ENCODE measurements at regions of chr19 and their contacts with region 1.

Region 1: DNA sequence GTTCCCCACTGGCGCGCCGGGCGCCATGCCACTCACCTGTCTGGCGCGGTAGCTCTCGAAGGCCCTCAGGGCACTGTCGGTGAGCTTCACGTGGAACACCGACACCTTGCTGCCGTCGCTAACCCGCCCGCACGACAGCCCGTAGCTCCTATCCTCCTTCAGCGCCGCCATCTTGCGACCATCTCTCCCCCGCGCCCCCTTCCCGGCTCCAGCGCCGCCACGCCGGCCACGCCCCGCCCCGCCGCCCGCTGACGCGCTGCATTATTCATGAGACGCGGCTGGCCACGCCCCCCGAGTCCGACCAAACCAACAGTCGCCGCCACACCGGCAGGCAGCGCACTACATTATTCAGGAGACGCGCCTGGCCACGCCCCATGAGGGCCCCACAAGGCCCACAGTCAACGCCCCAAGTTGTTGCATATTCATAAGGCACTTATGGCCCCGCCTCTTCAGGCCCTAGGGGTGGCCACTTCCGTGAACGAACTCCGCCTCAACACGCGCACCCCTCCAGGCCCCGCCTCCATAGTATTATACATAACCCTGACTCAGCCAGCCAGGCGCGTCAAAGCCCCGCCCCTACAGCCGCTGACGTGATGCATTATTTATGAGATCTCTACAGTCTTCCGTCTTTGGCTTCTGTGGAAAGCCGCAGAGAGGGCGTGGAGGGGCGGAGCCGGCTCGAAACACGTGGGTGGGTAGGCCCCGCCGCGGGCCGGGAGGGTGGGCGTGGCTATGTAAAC is at the start of gene ELL:
- DNase-seq: peak; percentile 100
- H3K4me3 ChIP-seq: peak within 1 kb of the TSS; percentile 92
- H3K27ac ChIP-seq: peak within 1 kb of the TSS; percentile 52
- H3K4me1 ChIP-seq: peaks cover 17% of the 10 kb centered on the region
- CTCF ChIP-seq: no peak
- total RNA-seq, gene ELL: 14.4 and 18.7 TPM in 2 replicates

Region 2: DNA sequence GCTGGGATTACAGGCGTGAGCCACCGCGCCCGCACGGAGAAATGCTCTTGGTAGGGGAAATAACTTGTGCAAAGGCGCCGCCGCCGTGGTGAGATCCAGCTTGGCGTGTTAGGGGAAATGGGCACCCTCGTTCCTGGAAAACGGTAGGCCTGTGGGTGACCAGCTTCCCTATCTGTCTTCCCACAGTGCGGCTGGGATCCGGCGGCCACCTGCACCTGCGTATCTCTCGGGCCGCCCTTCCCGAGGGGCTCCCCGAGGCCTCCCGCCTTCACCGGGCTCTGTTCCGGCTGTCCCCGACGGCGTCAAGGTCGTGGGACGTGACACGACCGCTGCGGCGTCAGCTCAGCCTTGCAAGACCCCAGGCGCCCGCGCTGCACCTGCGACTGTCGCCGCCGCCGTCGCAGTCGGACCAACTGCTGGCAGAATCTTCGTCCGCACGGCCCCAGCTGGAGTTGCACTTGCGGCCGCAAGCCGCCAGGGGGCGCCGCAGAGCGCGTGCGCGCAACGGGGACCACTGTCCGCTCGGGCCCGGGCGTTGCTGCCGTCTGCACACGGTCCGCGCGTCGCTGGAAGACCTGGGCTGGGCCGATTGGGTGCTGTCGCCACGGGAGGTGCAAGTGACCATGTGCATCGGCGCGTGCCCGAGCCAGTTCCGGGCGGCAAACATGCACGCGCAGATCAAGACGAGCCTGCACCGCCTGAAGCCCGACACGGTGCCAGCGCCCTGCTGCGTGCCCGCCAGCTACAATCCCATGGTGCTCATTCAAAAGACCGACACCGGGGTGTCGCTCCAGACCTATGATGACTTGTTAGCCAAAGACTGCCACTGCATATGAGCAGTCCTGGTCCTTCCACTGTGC is 133.7 kb before region 1 on chr19:
- CTCF ChIA-PET with region 1: no interaction called
- POLR2A ChIA-PET with region 1: no interaction called
- intact Hi-C with region 1: no loop called
- DNase-seq: peak; percentile 87
- H3K4me3 ChIP-seq: peak overlapping the region; percentile 53
- H3K27ac ChIP-seq: no peak overlapping the region
- H3K4me1 ChIP-seq: peaks cover 14% of the 10 kb centered on the region
- CTCF ChIP-seq: peak; percentile 91

Region 3: DNA sequence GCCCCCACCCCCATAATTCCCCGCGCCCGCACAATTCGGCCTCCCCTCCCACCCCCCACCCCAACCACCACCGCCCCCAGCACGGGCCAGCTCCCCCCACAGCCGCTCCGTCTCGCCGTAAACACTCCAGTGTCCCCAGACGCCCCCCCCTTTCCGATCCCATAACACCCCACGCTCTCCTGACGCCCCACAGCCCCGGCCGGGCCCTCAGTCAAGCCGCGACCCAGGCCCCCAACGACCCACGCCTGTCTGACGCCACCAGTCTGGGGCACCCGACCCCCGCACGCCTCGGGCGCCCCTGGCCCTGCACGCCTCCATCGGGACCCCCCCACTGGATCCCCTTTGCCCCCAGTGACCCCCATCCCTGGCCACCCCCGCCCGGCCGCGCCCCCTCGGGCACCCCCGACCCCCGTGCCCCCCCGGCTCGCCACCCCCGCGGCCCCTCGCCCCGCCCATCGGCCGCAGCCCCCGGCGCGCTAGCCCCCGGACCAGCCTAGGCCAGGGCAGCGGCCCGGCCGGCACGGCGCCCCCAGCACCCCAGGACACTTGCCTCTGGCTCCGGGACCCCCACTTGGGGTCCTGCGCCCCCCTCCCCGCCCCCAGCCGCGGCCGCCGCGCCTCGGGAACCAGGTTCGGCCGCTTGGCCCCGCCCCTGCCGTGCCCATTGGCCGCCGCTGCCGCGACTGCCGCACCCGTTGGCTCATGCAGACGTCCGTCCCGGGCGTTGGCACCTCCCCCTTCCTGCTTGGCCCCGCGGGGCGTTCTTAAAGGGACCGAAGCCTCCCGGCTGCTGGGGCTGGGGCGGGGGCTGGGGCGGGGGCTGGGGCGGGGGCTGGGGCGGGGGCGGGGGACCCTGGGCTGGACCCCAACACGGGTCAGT is 21.1 kb after region 1 on chr19 and contains the start of gene FKBP8:
- CTCF ChIA-PET with region 1: interaction called, 4 read pairs
- POLR2A ChIA-PET with region 1: interaction called, 8 read pairs
- intact Hi-C with region 1: loop called (anchors 1 kb)
- DNase-seq: peak; percentile 94
- H3K4me3 ChIP-seq: peak within 1 kb of the TSS; percentile 76
- H3K27ac ChIP-seq: peak within 1 kb of the TSS; percentile 54
- H3K4me1 ChIP-seq: peaks cover 19% of the 10 kb centered on the region
- CTCF ChIP-seq: no peak
- total RNA-seq, gene FKBP8: 159 and 200 TPM in 2 replicates

Region 4: DNA sequence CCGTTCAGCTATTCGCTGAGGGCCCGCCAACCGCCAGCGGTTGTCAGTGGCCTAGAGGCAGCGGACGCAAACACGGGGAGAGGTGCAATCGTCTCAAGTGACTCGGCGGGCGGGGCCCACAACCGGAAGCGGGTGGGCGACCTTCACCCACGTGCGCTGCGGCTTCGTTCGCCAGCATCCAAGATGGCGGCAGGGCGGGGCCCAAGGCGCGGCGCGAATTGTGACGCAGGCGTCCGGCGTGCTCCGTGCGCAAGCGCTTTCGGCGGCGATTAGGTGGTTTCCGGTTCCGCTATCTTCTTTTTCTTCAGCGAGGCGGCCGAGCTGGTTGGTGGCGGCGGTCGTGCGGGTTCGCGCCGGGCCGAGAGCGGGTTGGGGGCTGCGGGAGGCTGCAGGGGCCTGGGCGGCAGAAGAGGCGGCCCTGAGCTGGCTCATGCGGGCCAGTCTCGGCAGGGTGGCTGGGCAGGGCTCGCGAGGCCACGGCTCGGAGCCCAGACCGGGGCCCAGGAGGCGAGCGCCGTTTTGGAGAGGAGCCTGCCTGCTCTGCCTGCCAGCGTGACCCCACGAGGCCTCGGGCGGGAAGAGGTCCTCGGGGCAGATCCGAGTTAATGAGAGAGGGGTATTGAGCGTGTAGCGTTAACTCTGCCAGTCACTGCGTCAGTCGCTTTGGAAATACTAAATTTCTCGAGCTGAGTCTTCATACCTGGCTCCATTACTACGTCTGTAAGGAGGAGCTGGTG is 49.7 kb after region 1 on chr19 and contains the start of gene UBA52:
- CTCF ChIA-PET with region 1: no interaction called
- POLR2A ChIA-PET with region 1: interaction called, 8 read pairs
- intact Hi-C with region 1: loop called (anchors 1 kb)
- DNase-seq: peak; percentile 99
- H3K4me3 ChIP-seq: peak within 1 kb of the TSS; percentile 82
- H3K27ac ChIP-seq: peak within 1 kb of the TSS; percentile 75
- H3K4me1 ChIP-seq: peaks cover 19% of the 10 kb centered on the region
- CTCF ChIP-seq: no peak
- total RNA-seq, gene UBA52: 1,188 and 1,580 TPM in 2 replicates

Region 5: DNA sequence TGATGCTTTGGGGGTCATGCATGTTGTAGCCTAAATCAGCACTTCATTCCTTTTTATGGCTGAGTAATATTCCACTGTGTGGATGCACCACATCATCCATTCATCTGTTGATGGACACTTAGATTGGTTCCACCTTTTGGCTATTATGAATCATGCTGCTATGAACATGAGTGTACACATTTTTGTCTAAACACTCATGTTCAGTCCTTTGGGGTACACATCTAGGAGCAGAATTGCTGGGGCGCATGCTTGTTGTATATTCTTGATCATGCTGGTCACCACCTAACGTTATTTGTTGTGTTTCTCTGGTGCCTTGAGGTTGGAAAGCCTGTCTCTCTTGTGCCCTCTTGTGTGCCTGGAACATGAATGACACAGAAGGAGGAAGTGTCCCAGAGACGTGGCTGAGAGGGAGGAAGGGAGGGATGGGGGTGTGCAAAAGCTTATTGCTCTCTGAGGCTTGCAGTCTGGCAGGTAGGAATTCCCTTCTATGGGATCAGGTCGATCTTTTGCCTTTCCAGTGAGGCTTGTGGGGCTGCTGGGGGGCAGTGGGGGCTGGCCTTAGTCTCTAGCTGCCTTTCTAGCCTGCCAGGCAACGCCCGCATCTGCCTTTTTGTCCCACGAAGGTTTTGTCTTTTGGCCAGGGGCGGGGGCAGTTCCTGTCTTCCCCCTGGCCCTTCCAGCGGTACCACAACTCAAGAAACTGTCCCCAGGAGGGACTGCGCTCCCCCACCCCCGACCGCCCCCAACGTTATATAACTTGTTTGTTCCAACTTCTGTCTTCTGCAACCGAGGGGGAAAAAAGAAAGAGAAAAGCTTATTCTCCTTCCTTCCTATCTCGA is 122.4 kb after region 1 on chr19:
- CTCF ChIA-PET with region 1: no interaction called
- POLR2A ChIA-PET with region 1: no interaction called
- intact Hi-C with region 1: no loop called
- DNase-seq: peak; percentile 40
- H3K4me3 ChIP-seq: no peak overlapping the region
- H3K27ac ChIP-seq: no peak overlapping the region
- H3K4me1 ChIP-seq: no peaks in the 10 kb centered on the region
- CTCF ChIP-seq: peak; percentile 40; the same call in 1 of the 2 replicates

Region 6: DNA sequence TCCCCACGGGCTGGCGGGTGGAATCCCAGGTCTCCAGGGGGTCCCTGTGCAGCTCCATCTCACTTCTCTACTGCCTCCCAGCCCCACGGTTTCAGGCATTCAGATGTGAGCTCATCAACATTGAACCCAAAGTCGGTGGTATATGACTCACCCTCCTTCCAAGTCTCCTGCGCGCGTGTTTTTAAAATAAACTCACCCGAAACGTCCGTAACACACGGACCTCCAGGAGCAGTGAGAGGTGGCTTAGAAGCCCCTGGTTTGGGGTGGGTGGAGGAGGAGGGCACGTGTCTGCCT is 147.4 kb after region 1 on chr19:
- CTCF ChIA-PET with region 1: no interaction called
- POLR2A ChIA-PET with region 1: no interaction called
- intact Hi-C with region 1: no loop called
- DNase-seq: no peak
- H3K4me3 ChIP-seq: no peak overlapping the region
- H3K27ac ChIP-seq: no peak overlapping the region
- H3K4me1 ChIP-seq: peaks cover 8% of the 10 kb centered on the region
- CTCF ChIP-seq: no peak

Region 7: GRCh38 chr19:18846862-18847548 is 324.9 kb after region 1 on chr19:
- CTCF ChIA-PET with region 1: no interaction called
- POLR2A ChIA-PET with region 1: no interaction called
- intact Hi-C with region 1: loop called (anchors 5 kb)
- DNase-seq: peak; percentile 72
- H3K4me3 ChIP-seq: no peak overlapping the region
- H3K27ac ChIP-seq: no peak overlapping the region
- H3K4me1 ChIP-seq: peaks cover 8% of the 10 kb centered on the region
- CTCF ChIP-seq: peak; percentile 91

Measured in OCI-LY7 (cell line).